ENCODE measurements at regions of chr7 and their contacts with region 1.

Region 1: GRCh38 chr7:102300643-102301233 is 14.1 kb downstream of the SH2B2 start:
- DNase-seq: no peak
- H3K4me3 ChIP-seq: no peak overlapping the region
- H3K27ac ChIP-seq: no peak overlapping the region
- H3K4me1 ChIP-seq: no peaks in the 10 kb centered on the region
- H3K27me3 ChIP-seq: peaks cover 3% of the 10 kb centered on the region
- CTCF ChIP-seq: no peak

Region 2: GRCh38 chr7:102258749-102259107 is 42.0 kb before region 1 on chr7:
- CTCF ChIA-PET with region 1: no interaction called
- dilution Hi-C with region 1: loop called (anchors 5 kb)
- in situ Hi-C with region 1: no loop called
- intact Hi-C with region 1: no loop called
- DNase-seq: no peak
- H3K4me3 ChIP-seq: no peak overlapping the region
- H3K27ac ChIP-seq: no peak overlapping the region
- H3K4me1 ChIP-seq: no peaks in the 10 kb centered on the region
- H3K27me3 ChIP-seq: no peaks in the 10 kb centered on the region
- CTCF ChIP-seq: no peak